ENCODE measurements at regions of chr15 and their contacts with region 1.

Region 1: DNA sequence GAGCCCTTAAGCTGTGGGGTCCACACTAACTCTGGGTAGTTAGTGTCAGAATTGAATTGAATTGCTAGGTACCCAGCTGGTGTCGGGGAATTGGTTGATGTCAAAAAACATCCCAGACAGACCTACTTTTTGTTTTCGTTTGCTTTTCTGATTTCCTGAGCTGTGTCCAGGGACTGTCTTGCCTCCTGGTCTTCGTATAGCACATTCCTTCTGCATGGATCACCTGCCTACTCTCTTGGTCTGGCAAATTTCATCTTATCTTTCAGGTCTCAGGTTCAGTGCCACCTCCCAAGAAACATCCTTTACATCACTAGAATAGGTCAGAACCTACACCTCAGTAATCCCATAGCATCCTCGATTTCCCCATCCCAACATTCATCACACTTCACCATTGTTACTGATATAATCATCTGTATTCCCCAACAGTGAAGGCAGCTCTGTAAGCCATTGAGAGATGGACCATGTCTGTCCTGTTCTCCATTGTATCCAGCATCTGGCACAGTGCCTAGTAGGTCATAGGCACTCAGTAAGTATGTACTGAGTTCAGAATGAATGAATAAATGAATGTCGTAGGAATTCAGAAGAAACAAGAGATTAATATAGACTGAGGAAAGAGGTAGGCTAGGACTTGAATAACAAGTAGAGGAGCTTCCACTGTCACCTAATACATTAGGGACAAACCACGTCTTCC is 81.2 kb downstream of the ANP32A start:
- DNase-seq: no peak
- ATAC-seq: no peak
- H3K4me3 ChIP-seq: no peak overlapping the region
- H3K27ac ChIP-seq: no peak overlapping the region
- H3K4me1 ChIP-seq: no peaks in the 10 kb centered on the region
- H3K27me3 ChIP-seq: peaks cover 18% of the 10 kb centered on the region
- CTCF ChIP-seq: no peak
- POLR2A ChIP-seq: no peak
- RAD21 ChIP-seq: no peak

Region 2: DNA sequence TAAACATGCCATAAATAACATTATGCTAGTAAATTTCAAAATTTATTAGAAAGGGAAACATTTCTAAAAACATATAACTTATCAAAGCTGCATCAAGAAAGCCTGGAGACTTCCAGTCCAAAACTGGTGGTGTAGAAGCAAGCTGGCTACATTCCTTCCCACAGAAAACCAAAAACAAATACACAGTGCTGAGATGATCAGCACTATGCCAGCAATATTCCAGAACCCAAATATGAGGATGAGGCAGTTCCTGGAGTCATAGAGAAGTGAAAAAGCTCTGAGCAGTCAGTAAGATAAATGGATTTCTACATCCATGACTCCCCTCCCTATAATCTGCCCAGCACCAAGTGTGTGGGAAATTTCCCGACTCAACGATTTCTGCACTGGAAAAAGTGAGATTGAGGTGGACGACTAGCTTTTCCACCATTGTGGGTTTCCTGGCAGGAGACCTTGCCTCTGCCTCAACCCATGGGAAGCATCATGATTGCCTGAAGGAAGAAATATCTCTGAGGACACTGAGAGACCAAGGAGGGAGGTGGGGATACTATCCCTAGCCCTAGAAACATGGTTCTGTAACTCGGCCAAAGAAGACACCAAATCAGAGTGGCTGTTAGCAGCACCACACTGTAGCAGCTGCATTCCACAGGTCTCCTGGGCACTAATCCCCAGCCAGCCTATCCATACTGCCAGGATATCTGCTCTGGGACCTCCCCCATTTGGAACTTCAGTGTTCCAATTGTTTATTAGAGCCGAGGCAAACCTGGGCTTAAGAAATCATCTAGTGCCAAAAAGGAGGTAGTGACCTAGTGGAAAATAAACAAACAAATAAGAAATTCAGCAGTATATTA is 498.2 kb before region 1 on chr15:
- CTCF ChIA-PET with region 1: no interaction called
- POLR2A ChIA-PET with region 1: no interaction called
- dilution Hi-C with region 1: no loop called
- in situ Hi-C with region 1: no loop called
- intact Hi-C with region 1: loop called (anchors 5 kb)
- DNase-seq: no peak
- ATAC-seq: peak; percentile 57; the same call in 1 of the 2 replicates
- H3K4me3 ChIP-seq: no peak overlapping the region
- H3K27ac ChIP-seq: no peak overlapping the region
- H3K4me1 ChIP-seq: no peaks in the 10 kb centered on the region; the same call in 1 of the 2 replicates
- H3K27me3 ChIP-seq: no peaks in the 10 kb centered on the region
- CTCF ChIP-seq: no peak
- POLR2A ChIP-seq: no peak
- RAD21 ChIP-seq: no peak

Region 3: DNA sequence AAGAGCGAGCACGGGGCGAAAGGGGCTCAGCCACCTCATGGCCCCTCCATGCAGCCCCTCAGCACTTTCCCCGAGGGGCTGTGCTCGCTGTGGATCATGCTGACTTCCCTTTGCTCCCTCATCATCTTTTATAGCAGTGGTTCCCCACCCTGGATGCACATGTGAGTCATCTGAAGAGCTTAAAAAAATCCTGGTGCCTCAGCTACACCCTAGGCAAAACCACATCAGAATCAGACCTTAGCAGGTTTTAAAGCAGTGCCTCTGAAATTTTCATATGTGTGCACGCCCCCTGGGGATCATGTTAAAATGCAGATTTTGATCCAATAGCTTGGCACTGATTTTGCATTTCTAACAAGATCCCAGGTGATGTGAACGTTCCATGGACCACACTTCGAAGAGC is 411.1 kb before region 1 on chr15:
- CTCF ChIA-PET with region 1: no interaction called
- POLR2A ChIA-PET with region 1: no interaction called
- dilution Hi-C with region 1: no loop called
- in situ Hi-C with region 1: no loop called
- intact Hi-C with region 1: no loop called
- DNase-seq: no peak
- ATAC-seq: no peak
- H3K4me3 ChIP-seq: no peak overlapping the region
- H3K27ac ChIP-seq: no peak overlapping the region
- H3K4me1 ChIP-seq: peaks cover under 1% of the 10 kb centered on the region; the same call in 1 of the 2 replicates
- H3K27me3 ChIP-seq: no peaks in the 10 kb centered on the region
- CTCF ChIP-seq: no peak
- POLR2A ChIP-seq: no peak
- RAD21 ChIP-seq: no peak

Region 4: DNA sequence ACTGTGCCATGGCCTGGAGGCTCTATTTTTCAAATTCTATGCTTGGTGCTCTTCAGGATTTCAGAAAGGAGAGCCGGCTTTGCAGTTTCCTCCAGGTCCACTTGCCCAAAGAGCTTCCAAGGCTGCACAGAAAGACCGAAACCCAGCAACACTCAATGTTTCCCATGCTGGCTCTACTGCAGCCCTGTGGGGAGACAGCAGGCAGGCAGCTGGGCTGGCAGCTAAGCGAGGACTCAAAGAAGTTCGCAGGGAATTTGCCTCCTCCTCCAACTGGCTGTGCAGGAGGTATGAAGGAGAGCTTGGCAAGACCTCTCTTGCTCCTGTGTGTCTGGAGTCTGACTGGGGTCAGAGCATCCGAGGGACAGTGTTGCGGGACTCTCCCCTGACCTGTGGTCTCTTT is 290.1 kb before region 1 on chr15:
- CTCF ChIA-PET with region 1: no interaction called
- POLR2A ChIA-PET with region 1: no interaction called
- dilution Hi-C with region 1: no loop called
- in situ Hi-C with region 1: no loop called
- intact Hi-C with region 1: no loop called
- DNase-seq: no peak
- ATAC-seq: no peak
- H3K4me3 ChIP-seq: no peak overlapping the region
- H3K27ac ChIP-seq: no peak overlapping the region
- H3K4me1 ChIP-seq: no peaks in the 10 kb centered on the region
- H3K27me3 ChIP-seq: peaks cover 28% of the 10 kb centered on the region
- CTCF ChIP-seq: no peak
- POLR2A ChIP-seq: no peak
- RAD21 ChIP-seq: no peak

Region 5: GRCh38 chr15:69475769-69476358 is 736.3 kb after region 1 on chr15:
- CTCF ChIA-PET with region 1: no interaction called
- POLR2A ChIA-PET with region 1: no interaction called
- dilution Hi-C with region 1: no loop called
- in situ Hi-C with region 1: no loop called
- intact Hi-C with region 1: no loop called
- DNase-seq: peak; percentile 63
- ATAC-seq: peak; percentile 93
- H3K4me3 ChIP-seq: no peak overlapping the region
- H3K27ac ChIP-seq: no peak overlapping the region
- H3K4me1 ChIP-seq: peaks cover 9% of the 10 kb centered on the region
- H3K27me3 ChIP-seq: peaks cover 11% of the 10 kb centered on the region
- CTCF ChIP-seq: peak; percentile 92
- POLR2A ChIP-seq: no peak
- RAD21 ChIP-seq: peak; percentile 94

Measured in IMR-90 (cell line).